ENCODE measurements at regions of chr16 and their contacts with region 1.

Region 1: DNA sequence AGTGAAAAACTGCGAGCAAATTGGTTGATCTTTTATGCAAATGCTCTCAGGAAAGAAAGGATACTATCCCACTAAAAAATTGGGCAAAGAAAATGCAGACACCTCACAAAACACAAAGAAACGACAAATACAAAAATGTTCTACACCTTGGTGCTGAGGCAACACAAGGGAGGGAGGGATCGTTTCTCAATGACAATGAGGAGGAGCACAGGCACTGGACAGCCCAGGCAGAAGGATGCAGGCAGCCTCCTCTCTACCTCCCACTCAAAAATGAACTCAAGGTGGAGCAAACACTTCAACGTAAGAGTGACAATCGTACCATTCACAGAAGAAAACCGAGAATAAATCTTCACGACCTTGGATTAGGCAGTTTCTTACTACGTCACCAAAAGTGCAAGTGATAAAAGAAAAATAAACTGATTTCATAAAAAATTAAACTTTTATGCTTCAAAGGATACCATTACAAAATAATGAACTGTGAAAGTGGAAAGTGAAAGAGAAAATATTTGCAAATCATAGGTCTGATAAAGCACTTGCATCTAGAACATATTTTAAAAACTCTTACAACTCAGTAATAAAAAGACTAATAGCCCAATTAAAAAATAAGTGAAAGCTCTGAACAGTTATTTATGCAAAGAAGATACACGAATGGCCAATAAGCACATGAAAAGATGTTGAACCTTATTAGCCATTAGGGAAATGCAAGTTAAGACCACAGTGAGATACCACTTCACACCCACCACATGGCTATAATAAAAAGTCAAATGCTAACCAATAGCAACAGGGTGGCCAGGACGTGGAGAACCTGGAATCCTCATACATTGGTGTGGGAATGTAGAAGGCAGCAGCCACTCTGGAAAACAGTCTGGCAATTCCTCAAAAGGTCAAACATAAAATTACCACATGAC is 80.8 kb upstream of the TRAP1 start:
- DNase-seq: peak in 1 of 2 donors; percentile 24
- ATAC-seq: peak in 2 of 3 donors; percentile 34 to 35
- H3K4me3 ChIP-seq: no peak overlapping the region
- H3K4me3 Mint-ChIP-seq: peak overlapping the region; percentile 79
- H3K27ac ChIP-seq: no peak overlapping the region
- H3K27ac Mint-ChIP-seq: peak overlapping the region in 1 of 2 donors; percentile 23
- H3K4me1 ChIP-seq: peaks cover 47% of the 10 kb centered on the region
- H3K4me1 Mint-ChIP-seq: peaks cover 78 to 82% of the 10 kb centered on the region in 2 donors
- H3K27me3 ChIP-seq: no peaks in the 10 kb centered on the region
- H3K27me3 Mint-ChIP-seq: no peaks in the 10 kb centered on the region
- CTCF ChIP-seq: no peak

Region 2: GRCh38 chr16:3787924-3788661 is 10.1 kb before region 1 on chr16:
- intact Hi-C with region 1: loop called (anchors 2 kb)
- DNase-seq: no peak
- ATAC-seq: no peak
- H3K4me3 ChIP-seq: no peak overlapping the region
- H3K4me3 Mint-ChIP-seq: no peak overlapping the region
- H3K27ac ChIP-seq: no peak overlapping the region
- H3K27ac Mint-ChIP-seq: no peak overlapping the region
- H3K4me1 ChIP-seq: peaks cover 39% of the 10 kb centered on the region
- H3K4me1 Mint-ChIP-seq: peaks cover 53 to 63% of the 10 kb centered on the region in 2 donors
- H3K27me3 ChIP-seq: no peaks in the 10 kb centered on the region
- H3K27me3 Mint-ChIP-seq: no peaks in the 10 kb centered on the region
- CTCF ChIP-seq: no peak

Region 3: DNA sequence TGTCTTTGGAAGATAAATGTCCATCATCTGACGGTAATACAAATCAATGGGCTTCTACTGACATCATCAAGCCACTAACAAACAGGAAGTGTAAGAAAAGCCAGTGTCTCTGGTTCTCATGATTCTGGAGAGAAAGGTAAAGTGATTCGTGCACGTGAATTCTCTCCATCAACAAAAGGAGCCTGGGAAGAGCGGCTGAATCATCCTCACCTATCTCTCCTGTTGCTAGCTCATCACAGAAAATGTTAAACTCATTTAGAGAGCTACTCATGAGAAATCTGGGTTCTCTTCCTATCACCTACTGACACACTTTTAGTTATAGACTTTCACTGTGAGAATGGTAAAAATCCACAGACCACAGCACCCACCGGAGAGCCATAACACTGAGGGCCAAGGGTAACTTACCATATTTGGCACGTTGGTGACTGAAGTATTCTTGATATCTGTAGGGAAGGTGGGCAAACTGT is 12.1 kb after region 1 on chr16:
- intact Hi-C with region 1: loop called (anchors 1 kb)
- DNase-seq: no peak
- ATAC-seq: peak in 2 of 3 donors; percentile 75 to 83
- H3K4me3 ChIP-seq: no peak overlapping the region
- H3K4me3 Mint-ChIP-seq: peak overlapping the region; percentile 43
- H3K27ac ChIP-seq: no peak overlapping the region
- H3K27ac Mint-ChIP-seq: peak overlapping the region in 1 of 2 donors; percentile 28
- H3K4me1 ChIP-seq: peaks cover 64% of the 10 kb centered on the region
- H3K4me1 Mint-ChIP-seq: peaks cover 91 to 95% of the 10 kb centered on the region in 2 donors
- H3K27me3 ChIP-seq: no peaks in the 10 kb centered on the region
- H3K27me3 Mint-ChIP-seq: no peaks in the 10 kb centered on the region
- CTCF ChIP-seq: no peak

Region 4: DNA sequence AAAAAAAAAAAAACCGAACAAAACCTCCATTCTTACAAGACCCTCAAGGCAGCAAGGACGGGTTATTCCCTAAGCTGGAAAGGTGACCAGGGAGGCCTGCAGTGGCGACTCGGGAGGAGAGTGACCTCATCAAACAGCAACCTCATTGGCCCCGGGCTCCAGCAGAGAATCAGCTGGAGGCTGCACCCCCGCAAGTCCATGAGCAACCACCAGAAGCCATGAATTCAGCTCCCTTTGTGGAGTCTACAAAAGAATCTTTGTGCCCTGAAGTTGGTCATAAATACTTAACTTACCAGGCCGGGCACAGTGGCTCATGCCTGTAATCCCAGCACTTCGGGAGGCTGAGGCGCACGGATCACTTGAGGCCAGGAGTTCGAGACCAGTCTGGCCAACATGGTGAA is 163.3 kb after region 1 on chr16:
- intact Hi-C with region 1: no loop called
- DNase-seq: no peak
- ATAC-seq: no peak
- H3K4me3 ChIP-seq: no peak overlapping the region
- H3K4me3 Mint-ChIP-seq: no peak overlapping the region
- H3K27ac ChIP-seq: no peak overlapping the region
- H3K27ac Mint-ChIP-seq: peak overlapping the region; percentile 51 to 98
- H3K4me1 ChIP-seq: peaks cover 20% of the 10 kb centered on the region
- H3K4me1 Mint-ChIP-seq: peaks cover 15 to 24% of the 10 kb centered on the region in 2 donors
- H3K27me3 ChIP-seq: no peaks in the 10 kb centered on the region
- H3K27me3 Mint-ChIP-seq: peaks cover 7 to 8% of the 10 kb centered on the region in 2 donors
- CTCF ChIP-seq: no peak